Activated CD4-positive, alpha-beta memory T cell treated with anti-CD3 and anti-CD28 coated beads for 36 hours (primary cell): ENCODE measurements at regions of chr6 and their contacts with region 1.

Region 1: DNA sequence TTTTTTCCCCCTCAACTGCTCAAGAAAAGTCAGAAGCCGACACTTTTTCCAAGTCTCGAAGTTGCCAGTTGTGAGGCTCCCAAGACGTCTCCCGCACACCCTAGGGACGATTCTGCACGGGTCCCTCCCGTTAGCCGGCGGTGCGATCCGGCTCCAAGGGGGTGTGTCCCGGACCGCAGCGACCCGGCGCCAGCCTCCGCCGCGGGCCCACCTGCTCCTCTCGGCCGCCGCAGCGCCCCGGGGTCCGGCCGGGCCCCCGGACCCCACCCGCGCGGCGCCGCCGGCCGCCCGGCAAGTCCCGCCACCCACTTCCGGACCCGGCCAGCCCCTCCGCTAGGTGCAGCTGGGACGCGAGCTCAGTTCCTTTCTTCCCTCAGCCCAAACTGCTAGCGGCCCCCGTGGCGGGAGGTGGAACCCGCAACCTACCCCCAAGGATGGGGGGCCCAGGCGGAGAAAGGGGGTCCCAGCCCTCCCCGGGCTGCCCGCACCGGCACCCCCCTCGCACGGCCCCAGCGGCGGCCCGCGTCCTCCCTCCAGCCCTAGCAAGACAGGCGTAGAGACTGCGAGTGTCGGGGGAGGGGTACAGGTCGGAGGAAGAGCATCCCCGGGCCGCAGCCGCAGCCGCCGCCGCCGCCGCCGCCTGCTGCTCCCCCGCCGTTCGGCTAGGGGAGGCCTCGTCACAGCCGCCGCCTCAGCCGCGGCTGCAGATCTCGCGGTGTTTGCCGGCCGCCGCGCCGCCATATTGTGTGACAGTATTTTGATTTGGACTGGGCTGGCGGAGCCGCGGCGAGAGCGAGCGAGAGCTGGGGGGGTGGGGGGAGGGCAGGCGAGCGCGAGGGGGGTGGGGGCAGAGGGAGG is 485 bp upstream of the TAB2 start:
- DNase-seq: peak; percentile 93
- H3K4me3 Mint-ChIP-seq: peak overlapping the region; percentile 93
- H3K27ac Mint-ChIP-seq: peak overlapping the region; percentile 97
- H3K4me1 Mint-ChIP-seq: peaks cover 24% of the 10 kb centered on the region
- H3K27me3 Mint-ChIP-seq: no peaks in the 10 kb centered on the region

Region 2: GRCh38 chr6:149075616-149076364 is 241.2 kb before region 1 on chr6:
- CTCF ChIA-PET with region 1: no interaction called
- POLR2A ChIA-PET with region 1: interaction called, 7 read pairs
- intact Hi-C with region 1: loop called (anchors 2 kb)
- DNase-seq: peak; percentile 51
- H3K4me3 Mint-ChIP-seq: peak overlapping the region; percentile 7
- H3K27ac Mint-ChIP-seq: peak overlapping the region; percentile 93
- H3K4me1 Mint-ChIP-seq: peaks cover 40% of the 10 kb centered on the region
- H3K27me3 Mint-ChIP-seq: no peaks in the 10 kb centered on the region

Region 3: GRCh38 chr6:149147938-149148718 is 168.9 kb before region 1 on chr6:
- CTCF ChIA-PET with region 1: interaction called, 3 read pairs
- POLR2A ChIA-PET with region 1: interaction called, 5 read pairs
- intact Hi-C with region 1: loop called (anchors 2 kb)
- DNase-seq: peak; percentile 47
- H3K4me3 Mint-ChIP-seq: peak overlapping the region; percentile 45
- H3K27ac Mint-ChIP-seq: peak overlapping the region; percentile 91
- H3K4me1 Mint-ChIP-seq: peaks cover 87% of the 10 kb centered on the region
- H3K27me3 Mint-ChIP-seq: no peaks in the 10 kb centered on the region

Region 4: GRCh38 chr6:149235130-149235561 is 81.9 kb before region 1 on chr6:
- CTCF ChIA-PET with region 1: no interaction called
- POLR2A ChIA-PET with region 1: interaction called, 12 read pairs
- intact Hi-C with region 1: loop called (anchors 1 kb)
- DNase-seq: no peak
- H3K4me3 Mint-ChIP-seq: no peak overlapping the region
- H3K27ac Mint-ChIP-seq: peak overlapping the region; percentile 91
- H3K4me1 Mint-ChIP-seq: peaks cover 53% of the 10 kb centered on the region
- H3K27me3 Mint-ChIP-seq: no peaks in the 10 kb centered on the region

Region 5: GRCh38 chr6:149368065-149368464 is 51.0 kb after region 1 on chr6:
- CTCF ChIA-PET with region 1: no interaction called
- POLR2A ChIA-PET with region 1: no interaction called
- intact Hi-C with region 1: loop called (anchors 2 kb)
- DNase-seq: no peak
- H3K4me3 Mint-ChIP-seq: no peak overlapping the region
- H3K27ac Mint-ChIP-seq: no peak overlapping the region
- H3K4me1 Mint-ChIP-seq: peaks cover 45% of the 10 kb centered on the region
- H3K27me3 Mint-ChIP-seq: no peaks in the 10 kb centered on the region

Region 6: DNA sequence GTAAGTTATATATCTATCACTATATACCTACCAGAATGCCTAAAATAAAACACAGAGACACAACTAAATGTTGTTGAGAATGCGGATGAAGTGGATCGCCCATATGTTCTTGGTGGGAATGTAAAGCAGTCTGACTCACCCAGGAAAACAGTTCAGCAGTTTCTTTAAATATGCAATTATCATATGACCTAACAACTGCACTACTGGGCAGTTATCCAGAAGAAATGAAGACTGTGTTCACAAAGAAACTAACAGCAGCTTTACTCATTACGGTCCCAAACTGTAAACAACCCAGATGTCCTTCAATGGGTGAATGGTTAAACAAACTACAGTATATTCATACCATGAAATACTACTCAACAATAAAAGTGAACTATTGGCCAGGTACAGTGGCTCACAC is 182.0 kb after region 1 on chr6:
- CTCF ChIA-PET with region 1: no interaction called
- POLR2A ChIA-PET with region 1: interaction called, 3 read pairs
- intact Hi-C with region 1: loop called (anchors 2 kb)
- DNase-seq: no peak
- H3K4me3 Mint-ChIP-seq: no peak overlapping the region
- H3K27ac Mint-ChIP-seq: peak overlapping the region; percentile 97
- H3K4me1 Mint-ChIP-seq: peaks cover 82% of the 10 kb centered on the region
- H3K27me3 Mint-ChIP-seq: no peaks in the 10 kb centered on the region